ENCODE measurements at regions of chr1 and their contacts with region 1.

Region 1: DNA sequence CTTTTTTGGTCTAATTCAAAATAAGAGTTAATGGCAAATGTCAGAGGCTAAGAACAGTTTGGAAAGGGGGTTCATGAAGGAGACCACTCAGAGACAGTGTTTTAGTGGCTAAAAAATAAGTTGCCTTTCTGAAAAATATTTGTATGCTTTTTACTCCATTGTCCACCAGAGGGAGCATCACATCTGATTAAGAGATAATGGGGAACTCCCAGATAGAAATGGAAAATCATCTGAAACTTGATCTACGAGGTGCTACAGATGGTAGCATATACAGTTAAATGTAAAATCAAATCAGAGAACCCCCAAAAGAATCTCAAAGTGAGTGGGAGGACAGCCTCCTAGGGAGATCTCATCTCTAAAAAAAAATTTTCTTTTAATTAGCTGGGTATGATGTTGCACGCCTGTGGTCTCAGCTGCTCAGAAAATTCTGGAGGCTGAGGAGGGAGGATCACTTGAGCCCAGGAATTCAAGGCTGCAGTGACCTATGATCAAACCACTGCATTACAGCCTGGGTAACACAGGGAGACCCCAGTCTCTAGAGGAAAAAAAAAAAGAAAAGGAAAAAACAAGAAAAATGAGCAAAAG is 9.7 kb downstream of the SMYD3 start:
- DNase-seq: no peak
- ATAC-seq: peak; percentile 64 to 70
- H3K4me3 ChIP-seq: no peak overlapping the region
- H3K27ac ChIP-seq: no peak overlapping the region
- H3K4me1 ChIP-seq: peaks cover 0 to 3% of the 10 kb centered on the region in 2 donors
- H3K27me3 ChIP-seq: no peaks in the 10 kb centered on the region
- CTCF ChIP-seq: peak; percentile 60 to 80 (median 73)
- POLR2A ChIP-seq: no peak

Region 2: DNA sequence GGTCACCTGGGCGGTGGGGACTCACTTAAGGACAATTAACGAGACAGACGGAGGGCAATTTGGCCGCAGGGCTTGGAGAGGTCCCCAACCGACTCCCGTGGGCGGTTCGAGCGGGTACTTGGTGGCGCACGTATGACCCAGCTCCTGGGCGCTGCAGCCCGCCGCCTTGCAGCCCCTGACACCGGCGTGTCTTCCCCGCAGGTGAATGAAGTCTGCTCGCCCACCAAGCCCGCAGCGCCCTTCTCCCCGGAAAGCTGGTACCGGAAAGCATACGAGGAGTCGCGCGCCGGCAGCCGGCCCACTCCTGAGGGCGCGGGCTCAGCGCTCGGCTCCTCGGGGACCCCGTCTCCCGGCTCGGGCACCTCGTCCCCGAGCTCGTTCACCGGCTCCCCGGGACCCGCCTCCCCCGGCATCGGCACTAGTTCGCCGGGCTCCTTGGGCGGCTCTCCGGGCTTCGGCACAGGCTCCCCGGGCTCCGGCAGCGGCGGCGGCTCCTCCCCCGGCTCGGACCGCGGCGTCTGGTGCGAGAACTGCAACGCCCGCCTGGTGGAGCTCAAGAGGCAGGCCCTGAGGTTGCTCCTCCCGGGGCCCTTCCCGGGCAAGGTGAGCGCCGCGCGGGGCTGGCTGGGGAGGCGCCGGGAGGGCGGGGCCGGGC is 1341.2 kb before region 1 on chr1:
- in situ Hi-C with region 1: loop called in 3 of 4 experiments (anchors 25 kb)
- intact Hi-C with region 1: loop called (anchors 2 kb)
- DNase-seq: peak; percentile 24 to 44
- ATAC-seq: peak; percentile 46 to 61
- H3K4me3 ChIP-seq: peak overlapping the region; percentile 49 to 60 (median 54)
- H3K27ac ChIP-seq: no peak overlapping the region
- H3K4me1 ChIP-seq: peaks cover 4 to 29% of the 10 kb centered on the region in 2 donors
- H3K27me3 ChIP-seq: peaks cover 38 to 64% (median 41%) of the 10 kb centered on the region in 3 donors
- CTCF ChIP-seq: peak; percentile 14 to 64 (median 58)
- POLR2A ChIP-seq: no peak

Region 3: GRCh38 chr1:246002725-246003441 is 494.5 kb before region 1 on chr1:
- in situ Hi-C with region 1: loop called (anchors 25 kb)
- intact Hi-C with region 1: no loop called
- DNase-seq: peak; percentile 50 to 65
- ATAC-seq: peak; percentile 47 to 64
- H3K4me3 ChIP-seq: no peak overlapping the region
- H3K27ac ChIP-seq: no peak overlapping the region
- H3K4me1 ChIP-seq: peaks cover 3% of the 10 kb centered on the region in 2 donors
- H3K27me3 ChIP-seq: no peaks in the 10 kb centered on the region
- CTCF ChIP-seq: peak; percentile 56 to 87 (median 76)
- POLR2A ChIP-seq: no peak

Region 4: DNA sequence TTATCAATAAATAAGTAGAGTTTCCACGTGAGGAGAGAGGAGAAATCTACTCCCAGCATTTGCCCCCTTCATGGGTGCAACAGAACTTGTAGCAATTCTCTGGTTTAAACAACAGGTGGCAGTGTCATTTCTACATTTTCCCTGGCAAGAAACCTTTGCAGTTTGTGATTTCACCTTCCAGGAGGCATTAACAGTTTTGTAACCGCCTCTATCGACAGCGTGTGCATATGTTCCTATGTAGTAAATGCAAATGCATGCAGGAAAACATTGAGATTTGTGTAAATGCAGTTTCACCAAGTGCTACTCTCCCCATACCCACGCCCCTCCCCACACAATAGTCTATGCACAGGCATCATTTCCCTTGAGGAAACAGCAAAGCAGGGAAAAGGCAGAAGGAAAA is 485.1 kb before region 1 on chr1:
- in situ Hi-C with region 1: loop called (anchors 25 kb)
- intact Hi-C with region 1: loop called (anchors 2 kb)
- DNase-seq: no peak
- ATAC-seq: peak in 1 of 2 donors; percentile 39
- H3K4me3 ChIP-seq: no peak overlapping the region
- H3K27ac ChIP-seq: no peak overlapping the region
- H3K4me1 ChIP-seq: peaks cover 0 to 4% of the 10 kb centered on the region in 2 donors
- H3K27me3 ChIP-seq: no peaks in the 10 kb centered on the region
- CTCF ChIP-seq: peak in 4 of 5 experiments; percentile 29 to 57 (median 48)
- POLR2A ChIP-seq: no peak

Region 5: GRCh38 chr1:246597340-246597739 is 99.9 kb after region 1 on chr1:
- in situ Hi-C with region 1: no loop called
- intact Hi-C with region 1: no loop called
- DNase-seq: no peak
- ATAC-seq: peak; percentile 24 to 29
- H3K4me3 ChIP-seq: no peak overlapping the region
- H3K27ac ChIP-seq: peak overlapping the region; percentile 32 to 55 (median 40)
- H3K4me1 ChIP-seq: peaks cover 23 to 33% of the 10 kb centered on the region in 2 donors
- H3K27me3 ChIP-seq: no peaks in the 10 kb centered on the region
- CTCF ChIP-seq: no peak
- POLR2A ChIP-seq: no peak

Region 6: DNA sequence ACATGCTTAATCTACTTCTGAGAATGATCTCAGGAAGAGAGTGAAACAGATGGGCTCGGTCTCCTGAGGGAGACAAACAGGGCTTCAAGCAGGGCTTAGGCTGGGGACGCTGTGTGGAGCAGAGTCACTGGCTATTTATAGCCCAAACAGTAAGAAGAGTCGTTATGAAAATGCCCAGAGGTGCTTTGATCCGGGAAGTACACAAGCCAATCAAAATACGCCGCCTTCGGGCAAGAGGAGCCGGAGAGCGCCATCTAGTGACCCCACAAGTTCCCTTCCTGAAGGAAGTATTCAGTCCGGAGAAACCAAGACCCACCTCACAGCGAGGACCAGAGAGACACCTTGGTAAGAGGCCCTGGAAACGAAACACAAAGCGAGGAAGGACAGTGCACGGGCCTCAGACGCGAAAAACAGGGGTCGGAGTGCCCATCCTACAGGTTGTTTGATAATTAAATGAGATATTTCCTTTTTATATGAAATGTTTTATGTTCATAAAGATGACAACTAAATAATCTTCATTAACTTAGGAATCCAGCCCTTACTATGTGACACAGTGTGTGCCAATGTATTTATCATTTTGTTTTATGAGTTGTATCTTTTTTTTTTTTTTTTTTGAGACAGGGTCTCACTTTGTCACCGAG is 201.8 kb after region 1 on chr1:
- in situ Hi-C with region 1: loop called (anchors 5 to 10 kb)
- intact Hi-C with region 1: loop called (anchors 1 kb)
- DNase-seq: peak; percentile 90 to 93
- ATAC-seq: peak; percentile 99 to 100
- H3K4me3 ChIP-seq: peak overlapping the region; percentile 17 to 38 (median 34)
- H3K27ac ChIP-seq: peak overlapping the region; percentile 83 to 91 (median 88)
- H3K4me1 ChIP-seq: peaks cover 9 to 13% of the 10 kb centered on the region in 2 donors
- H3K27me3 ChIP-seq: no peaks in the 10 kb centered on the region
- CTCF ChIP-seq: peak; percentile 85 to 92 (median 87)
- POLR2A ChIP-seq: peak; percentile 43 to 53

Region 7: GRCh38 chr1:246753670-246754535 is 256.5 kb after region 1 on chr1:
- in situ Hi-C with region 1: no loop called
- intact Hi-C with region 1: loop called (anchors 2 kb)
- DNase-seq: peak; percentile 6 to 26
- ATAC-seq: peak; percentile 56 to 87
- H3K4me3 ChIP-seq: no peak overlapping the region
- H3K27ac ChIP-seq: no peak overlapping the region
- H3K4me1 ChIP-seq: no peaks in the 10 kb centered on the region
- H3K27me3 ChIP-seq: no peaks in the 10 kb centered on the region
- CTCF ChIP-seq: peak; percentile 47 to 81 (median 68)
- POLR2A ChIP-seq: no peak

Region 8: DNA sequence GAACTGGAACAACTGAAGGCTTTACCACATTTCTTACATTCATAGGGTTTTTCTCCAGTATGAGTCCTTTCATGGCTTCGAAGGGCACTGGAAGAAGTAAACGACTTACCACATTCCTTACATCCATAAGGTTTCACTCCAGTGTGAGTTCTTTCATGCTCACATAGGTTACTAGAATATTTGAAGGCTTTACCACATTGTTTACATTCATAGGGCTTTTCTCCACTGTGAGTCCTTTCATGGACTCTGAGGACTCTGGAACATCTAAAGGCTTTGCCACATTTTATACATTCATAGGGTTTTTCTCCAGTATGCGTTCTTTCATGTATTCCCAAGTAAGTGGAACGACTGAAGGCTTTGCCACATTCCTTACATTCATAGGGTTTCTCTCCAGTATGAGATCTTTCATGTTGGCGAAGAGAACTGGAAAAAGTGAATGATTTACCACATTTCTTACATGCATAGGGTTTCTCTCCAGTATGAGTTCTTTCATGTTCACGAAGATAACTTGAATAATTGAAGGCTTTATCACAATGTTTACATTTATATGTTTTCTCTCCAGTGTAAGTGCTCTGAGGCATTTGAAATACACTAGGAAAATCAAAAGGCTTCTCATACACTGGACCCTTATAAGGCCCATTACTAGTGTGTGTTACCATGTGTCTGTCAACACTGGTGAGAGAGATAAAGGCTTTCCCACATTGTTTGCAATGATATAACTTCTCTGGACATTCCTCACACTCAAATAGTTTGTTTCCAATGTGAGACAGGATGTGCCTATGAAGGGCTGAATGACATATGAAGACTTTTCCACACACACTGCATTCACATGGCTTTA is 540.3 kb after region 1 on chr1:
- in situ Hi-C with region 1: no loop called
- intact Hi-C with region 1: no loop called
- DNase-seq: no peak
- ATAC-seq: no peak
- H3K4me3 ChIP-seq: no peak overlapping the region
- H3K27ac ChIP-seq: no peak overlapping the region
- H3K4me1 ChIP-seq: no peaks in the 10 kb centered on the region
- H3K27me3 ChIP-seq: no peaks in the 10 kb centered on the region
- CTCF ChIP-seq: no peak
- POLR2A ChIP-seq: no peak

Measured in gastrocnemius medialis (tissue), 4 donors.